ENCODE measurements at regions of chr15 and their contacts with region 1.

Region 1: DNA sequence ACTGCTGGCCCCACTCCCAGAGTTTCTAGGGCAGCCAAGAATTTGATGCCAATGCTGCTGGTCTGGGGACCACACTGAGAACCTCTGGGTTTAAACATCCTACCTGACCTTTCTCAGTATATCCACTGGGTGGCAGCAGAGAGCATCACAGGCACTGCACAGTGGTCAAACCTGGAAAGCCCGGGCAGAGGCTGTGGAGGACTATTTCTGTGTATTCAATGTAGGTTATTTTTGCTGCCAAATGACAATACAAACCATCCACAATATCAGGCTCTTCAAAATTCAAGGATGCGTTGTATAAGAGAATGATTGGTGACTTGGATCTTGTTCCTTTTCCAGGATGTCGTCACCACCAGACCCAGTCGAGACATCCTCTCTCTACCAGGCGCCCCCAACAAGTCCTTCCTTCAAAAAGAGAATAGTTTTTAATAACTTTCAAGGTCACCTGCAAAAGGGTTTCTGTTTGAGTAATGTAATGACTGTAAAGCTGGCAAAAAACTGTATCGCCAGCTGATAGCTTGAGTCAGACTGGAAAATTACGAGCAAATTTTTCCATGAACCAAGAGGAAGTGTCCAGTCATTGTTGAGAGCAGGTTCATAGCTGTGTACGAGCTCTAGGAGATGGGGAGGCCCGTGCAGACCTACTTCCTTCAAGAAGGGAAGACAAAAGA is 30.5 kb upstream of the MYZAP start:
- DNase-seq: peak; percentile 49
- H3K4me3 ChIP-seq: no peak overlapping the region
- H3K27me3 ChIP-seq: no peaks in the 10 kb centered on the region
- CTCF ChIP-seq: peak; percentile 92

Region 2: GRCh38 chr15:57541805-57542504 is 19.2 kb before region 1 on chr15:
- CTCF ChIA-PET with region 1: interaction called, 17 read pairs
- POLR2A ChIA-PET with region 1: no interaction called
- DNase-seq: peak; percentile 18
- H3K4me3 ChIP-seq: no peak overlapping the region
- H3K27me3 ChIP-seq: no peaks in the 10 kb centered on the region; the same call in none of the 2 replicates
- CTCF ChIP-seq: peak; percentile 92

Region 3: GRCh38 chr15:57611938-57612337 is 50.8 kb after region 1 on chr15:
- CTCF ChIA-PET with region 1: interaction called, 75 read pairs
- POLR2A ChIA-PET with region 1: no interaction called
- DNase-seq: no peak
- H3K4me3 ChIP-seq: no peak overlapping the region
- H3K27me3 ChIP-seq: no peaks in the 10 kb centered on the region
- CTCF ChIP-seq: peak; percentile 58

Region 4: DNA sequence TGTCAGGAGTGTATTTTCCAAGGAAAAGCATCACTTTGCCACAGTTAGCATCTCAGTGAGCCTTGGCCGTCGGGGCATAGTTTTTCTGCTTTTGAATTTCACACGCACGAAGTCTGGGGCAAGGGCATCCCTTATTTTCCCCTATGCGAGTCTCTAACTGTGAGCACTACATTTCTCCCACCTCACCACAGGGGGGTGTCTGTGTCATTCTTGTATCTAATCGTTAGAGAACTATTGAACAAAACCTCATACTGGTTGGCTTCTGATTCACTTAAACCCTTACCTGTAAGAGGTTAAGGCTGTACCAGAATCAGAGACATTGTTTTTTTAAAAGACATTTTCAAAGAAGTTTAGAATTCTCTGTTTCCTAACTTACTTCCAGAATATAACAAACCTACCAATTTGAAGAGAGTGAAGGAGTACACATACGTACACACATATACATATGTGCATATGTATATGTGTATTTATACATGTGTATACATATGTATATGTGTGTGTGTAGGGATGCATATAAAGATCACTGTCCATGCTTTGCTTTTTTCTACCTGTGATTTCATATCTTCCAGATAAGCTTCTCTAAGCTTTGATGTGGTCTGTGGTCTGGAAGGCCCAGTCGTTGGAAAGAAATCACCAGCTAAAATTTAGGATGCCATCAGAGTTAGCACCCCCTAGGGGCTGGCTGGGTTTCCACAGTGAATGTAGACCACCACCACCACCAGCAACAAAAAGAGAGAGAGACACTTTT is 79.9 kb after region 1 on chr15:
- CTCF ChIA-PET with region 1: interaction called, 18 read pairs
- POLR2A ChIA-PET with region 1: no interaction called
- DNase-seq: no peak
- H3K4me3 ChIP-seq: no peak overlapping the region
- H3K27me3 ChIP-seq: no peaks in the 10 kb centered on the region
- CTCF ChIP-seq: peak; percentile 67

Region 5: GRCh38 chr15:57732526-57733331 is 171.6 kb after region 1 on chr15:
- CTCF ChIA-PET with region 1: interaction called, 14 read pairs
- POLR2A ChIA-PET with region 1: no interaction called
- DNase-seq: no peak
- H3K4me3 ChIP-seq: no peak overlapping the region
- H3K27me3 ChIP-seq: no peaks in the 10 kb centered on the region
- CTCF ChIP-seq: peak; percentile 81

Region 6: DNA sequence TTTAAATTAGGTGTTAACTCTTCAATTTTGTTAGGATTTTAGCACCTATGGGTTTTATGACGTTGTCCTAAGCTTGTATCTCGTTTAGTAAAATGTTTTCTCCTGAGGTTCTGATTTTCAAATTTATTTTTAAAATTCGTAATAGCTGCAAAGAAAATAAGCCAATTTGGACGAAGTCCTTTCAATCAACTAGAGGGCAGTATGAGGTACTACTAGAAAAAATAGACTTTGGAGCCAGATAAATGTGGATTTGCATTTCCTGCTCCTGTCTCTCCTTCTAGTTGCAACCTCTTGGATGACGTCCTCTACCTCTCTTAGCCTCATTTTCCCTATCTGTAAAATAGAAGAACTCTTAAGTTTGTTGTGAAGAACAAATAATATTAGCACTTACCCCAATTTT is 1291.2 kb after region 1 on chr15:
- CTCF ChIA-PET with region 1: no interaction called
- POLR2A ChIA-PET with region 1: no interaction called
- DNase-seq: no peak
- H3K4me3 ChIP-seq: no peak overlapping the region
- H3K27me3 ChIP-seq: no peaks in the 10 kb centered on the region
- CTCF ChIP-seq: no peak